OCI-LY7 (cell line): ENCODE measurements at regions of chr15 and their contacts with region 1.

Region 1: DNA sequence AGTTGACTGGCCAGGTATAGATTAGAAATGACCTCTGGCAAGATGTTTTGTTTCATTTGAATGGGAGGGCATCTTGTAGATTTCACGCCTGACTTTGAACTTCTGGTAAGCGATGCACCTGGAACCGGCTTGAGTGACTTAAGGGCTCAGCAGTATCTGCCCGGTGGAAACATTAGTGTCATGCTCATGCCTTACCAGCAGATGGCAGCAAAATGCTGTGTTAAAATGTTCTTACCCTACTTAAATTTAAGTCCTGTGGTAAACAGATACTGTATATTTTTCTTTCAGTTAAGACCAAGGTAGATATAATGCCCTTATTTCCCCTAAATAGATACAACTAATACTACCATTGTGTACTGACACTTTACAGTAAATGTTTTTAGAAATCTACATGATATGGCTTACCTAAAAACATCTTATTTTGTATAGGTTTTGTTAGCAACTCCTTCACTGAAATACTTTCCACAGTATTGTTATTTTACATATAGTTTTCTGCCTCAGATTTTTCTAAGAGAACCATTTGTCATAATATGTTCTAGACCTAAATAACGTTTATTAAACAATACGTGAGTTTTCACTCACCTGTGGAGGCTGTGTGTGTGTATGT is 25.5 kb downstream of the ASB7 start:
- DNase-seq: peak; percentile 72
- H3K4me3 ChIP-seq: no peak overlapping the region
- H3K27ac ChIP-seq: no peak overlapping the region
- H3K4me1 ChIP-seq: no peaks in the 10 kb centered on the region
- CTCF ChIP-seq: peak; percentile 93

Region 2: GRCh38 chr15:100873029-100873677 is 245.3 kb after region 1 on chr15:
- CTCF ChIA-PET with region 1: no interaction called
- POLR2A ChIA-PET with region 1: no interaction called
- intact Hi-C with region 1: loop called (anchors 5 kb)
- DNase-seq: peak; percentile 77
- H3K4me3 ChIP-seq: no peak overlapping the region
- H3K27ac ChIP-seq: no peak overlapping the region
- H3K4me1 ChIP-seq: no peaks in the 10 kb centered on the region
- CTCF ChIP-seq: peak; percentile 93